Head of caudate nucleus (tissue), 42 donors: ENCODE measurements at regions of chr1 and their contacts with region 1.

Region 1: GRCh38 chr1:228804671-228805413 is 69.6 kb downstream of the RHOU start:
- DNase-seq: peak in 2 of 42 donors; percentile 13 to 32

Region 2: DNA sequence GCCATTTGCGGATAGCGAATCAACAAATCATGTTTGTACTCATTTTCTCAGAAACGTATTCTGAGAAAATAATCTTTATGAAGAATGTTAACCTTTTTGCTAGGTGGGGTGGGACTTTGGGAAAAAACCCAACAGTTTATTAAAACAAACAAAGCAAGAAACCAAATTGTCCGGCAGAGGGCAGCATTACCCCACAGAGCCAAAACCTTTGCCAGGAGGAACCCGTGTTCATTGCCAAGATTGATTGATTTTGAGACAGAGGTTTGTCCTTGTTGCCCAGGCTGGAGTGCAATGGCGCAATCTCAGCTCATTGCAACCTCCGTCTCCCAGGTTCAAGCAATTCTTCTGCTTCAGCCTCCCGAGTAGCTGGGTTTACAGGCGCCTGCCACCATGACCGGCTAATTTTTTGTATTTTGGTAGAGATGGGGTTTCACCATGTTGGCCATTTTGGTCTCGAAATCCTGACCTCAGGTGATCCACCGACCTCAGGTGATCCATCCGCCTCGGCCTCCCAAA is 140.4 kb before region 1 on chr1:
- intact Hi-C with region 1: no loop called
- DNase-seq: peak; percentile 19 to 95 (median 84)

Region 3: GRCh38 chr1:228754646-228755268 is 50.1 kb before region 1 on chr1:
- intact Hi-C with region 1: loop called (anchors 5 kb)
- DNase-seq: no peak